Panc1 (cell line): ENCODE measurements at regions of chr17 and their contacts with region 1.

Region 1: GRCh38 chr17:58066401-58066800 is 16.8 kb upstream of the DYNLL2 start:
- DNase-seq: no peak
- ATAC-seq: no peak
- H3K4me3 ChIP-seq: no peak overlapping the region
- H3K27ac ChIP-seq: no peak overlapping the region
- H3K4me1 ChIP-seq: no peaks in the 10 kb centered on the region
- H3K27me3 ChIP-seq: peaks cover 5% of the 10 kb centered on the region
- CTCF ChIP-seq: no peak

Region 2: DNA sequence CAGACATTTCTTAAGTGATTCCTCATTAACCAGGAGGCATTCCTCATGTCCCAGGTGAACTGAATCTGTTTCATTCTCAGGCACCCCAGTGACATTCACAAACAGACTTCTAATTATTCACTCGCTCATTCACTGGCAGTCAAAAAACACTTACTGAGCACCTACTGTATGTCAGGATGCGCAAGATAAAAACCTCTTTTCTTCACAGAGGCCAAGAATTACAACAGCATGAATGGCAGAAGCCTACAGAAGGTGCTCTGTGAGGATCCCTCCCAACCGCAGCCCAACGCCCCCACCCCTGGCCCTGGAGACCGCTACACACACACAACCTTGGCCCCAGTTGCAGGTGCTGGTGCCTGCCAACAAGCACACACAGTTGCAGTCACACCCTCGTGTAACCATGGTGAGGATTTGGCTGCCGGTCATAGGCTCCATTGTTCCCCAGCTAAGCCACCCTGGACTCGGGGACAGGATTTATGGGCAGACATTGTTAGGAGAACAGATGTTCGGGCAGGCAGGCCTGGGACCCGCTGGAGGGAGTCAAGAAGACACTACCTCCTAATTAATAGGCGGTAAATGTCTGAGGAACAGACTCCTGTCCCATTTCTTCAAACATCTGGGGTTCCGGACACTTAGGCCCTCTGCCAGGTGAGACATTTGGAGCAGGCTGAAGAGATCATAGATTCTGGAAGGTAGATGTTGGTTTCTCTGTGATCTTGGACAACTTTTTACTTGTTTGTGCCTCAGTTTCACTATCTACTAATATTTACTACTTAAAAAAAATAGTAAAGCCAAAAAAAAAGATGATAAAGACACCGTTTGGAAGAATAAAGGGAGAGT is 154.3 kb before region 1 on chr17:
- CTCF ChIA-PET with region 1: no interaction called
- POLR2A ChIA-PET with region 1: no interaction called
- in situ Hi-C with region 1: no loop called
- intact Hi-C with region 1: no loop called
- DNase-seq: no peak
- ATAC-seq: peak; percentile 59
- H3K4me3 ChIP-seq: no peak overlapping the region
- H3K27ac ChIP-seq: peak overlapping the region; percentile 10; the same call in 1 of the 2 replicates
- H3K4me1 ChIP-seq: peaks cover 45% of the 10 kb centered on the region
- H3K27me3 ChIP-seq: no peaks in the 10 kb centered on the region
- CTCF ChIP-seq: no peak

Region 3: DNA sequence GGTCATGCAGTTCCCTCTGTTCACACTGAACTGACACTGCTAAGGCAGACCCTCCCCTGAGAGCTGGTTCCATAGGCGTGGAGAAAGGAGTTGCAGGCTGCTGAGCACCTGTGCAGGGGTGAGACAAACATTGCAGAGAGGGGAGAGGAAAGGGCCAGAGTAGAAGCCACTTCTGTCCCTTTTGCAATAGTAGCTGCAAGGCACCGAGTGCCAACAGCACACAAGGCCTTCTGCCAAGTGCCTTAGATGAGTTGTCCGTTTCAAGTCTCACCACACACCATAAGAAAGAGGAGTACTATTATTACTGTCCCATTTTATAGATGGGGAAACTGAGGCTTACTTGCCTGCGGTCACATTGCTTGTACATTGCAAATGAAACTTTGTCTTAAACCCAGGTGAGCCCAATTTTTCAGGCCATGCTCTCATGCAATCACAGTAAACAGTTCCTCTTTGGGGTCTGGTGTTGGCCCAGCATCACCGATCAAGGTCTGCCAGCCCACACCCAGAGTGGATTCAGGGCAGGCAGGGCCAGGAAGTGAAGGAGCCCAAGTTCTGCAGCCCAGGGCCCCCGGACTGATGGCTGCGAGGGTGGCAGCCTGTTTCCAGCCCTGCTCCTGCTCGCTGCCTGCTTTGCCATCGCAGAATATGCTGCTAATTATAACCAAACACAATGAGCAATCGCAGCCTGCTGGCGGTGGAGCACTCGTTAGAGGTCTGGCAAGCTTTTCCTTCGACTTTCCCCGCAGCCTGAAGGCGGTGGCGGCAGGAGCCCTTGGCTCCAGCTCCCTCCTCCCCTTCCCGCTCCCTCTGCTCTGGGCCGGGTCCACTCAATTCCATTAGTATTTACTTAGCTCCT is 19.9 kb before region 1 on chr17:
- CTCF ChIA-PET with region 1: no interaction called
- POLR2A ChIA-PET with region 1: interaction called, 11 read pairs
- in situ Hi-C with region 1: no loop called
- intact Hi-C with region 1: no loop called
- DNase-seq: no peak
- ATAC-seq: no peak
- H3K4me3 ChIP-seq: no peak overlapping the region
- H3K27ac ChIP-seq: no peak overlapping the region
- H3K4me1 ChIP-seq: no peaks in the 10 kb centered on the region
- H3K27me3 ChIP-seq: no peaks in the 10 kb centered on the region
- CTCF ChIP-seq: no peak